B cell (primary cell): ENCODE measurements at regions of chr5 and their contacts with region 1.

Region 1: GRCh38 chr5:158599157-158599556 is 500.6 kb downstream of the EBF1 start:
- DNase-seq: peak; percentile 41
- ATAC-seq: peak; percentile 35
- H3K4me3 ChIP-seq: no peak overlapping the region
- H3K4me3 Mint-ChIP-seq: peak overlapping the region; percentile 56
- H3K27ac ChIP-seq: no peak overlapping the region
- H3K27ac Mint-ChIP-seq: peak overlapping the region; percentile 63
- H3K4me1 ChIP-seq: peaks cover 17 to 21% of the 10 kb centered on the region in 2 donors
- H3K4me1 Mint-ChIP-seq: peaks cover 24% of the 10 kb centered on the region
- H3K27me3 ChIP-seq: no peaks in the 10 kb centered on the region
- H3K27me3 Mint-ChIP-seq: no peaks in the 10 kb centered on the region
- CTCF ChIP-seq: no peak

Region 2: GRCh38 chr5:158560170-158560569 is 39.0 kb before region 1 on chr5:
- CTCF ChIA-PET with region 1: no interaction called
- POLR2A ChIA-PET with region 1: no interaction called
- intact Hi-C with region 1: loop called (anchors 5 kb)
- DNase-seq: peak; percentile 46
- ATAC-seq: peak; percentile 81
- H3K4me3 ChIP-seq: peak overlapping the region in 2 of 5 experiments; percentile 16
- H3K4me3 Mint-ChIP-seq: peak overlapping the region; percentile 80
- H3K27ac ChIP-seq: no peak overlapping the region
- H3K27ac Mint-ChIP-seq: peak overlapping the region; percentile 79
- H3K4me1 ChIP-seq: peaks cover 33 to 44% of the 10 kb centered on the region in 2 donors
- H3K4me1 Mint-ChIP-seq: peaks cover 57% of the 10 kb centered on the region
- H3K27me3 ChIP-seq: no peaks in the 10 kb centered on the region
- H3K27me3 Mint-ChIP-seq: no peaks in the 10 kb centered on the region
- CTCF ChIP-seq: no peak

Region 3: GRCh38 chr5:158611581-158611980 is 12.4 kb after region 1 on chr5:
- CTCF ChIA-PET with region 1: interaction called, 5 read pairs
- POLR2A ChIA-PET with region 1: interaction called, 10 read pairs
- intact Hi-C with region 1: no loop called
- DNase-seq: no peak
- ATAC-seq: no peak
- H3K4me3 ChIP-seq: no peak overlapping the region
- H3K4me3 Mint-ChIP-seq: no peak overlapping the region
- H3K27ac ChIP-seq: no peak overlapping the region
- H3K27ac Mint-ChIP-seq: no peak overlapping the region
- H3K4me1 ChIP-seq: peaks cover 0 to 2% of the 10 kb centered on the region in 2 donors
- H3K4me1 Mint-ChIP-seq: peaks cover 8% of the 10 kb centered on the region
- H3K27me3 ChIP-seq: no peaks in the 10 kb centered on the region
- H3K27me3 Mint-ChIP-seq: peaks cover 8% of the 10 kb centered on the region
- CTCF ChIP-seq: no peak